ENCODE measurements at regions of chr19 and their contacts with region 1.

Region 1: DNA sequence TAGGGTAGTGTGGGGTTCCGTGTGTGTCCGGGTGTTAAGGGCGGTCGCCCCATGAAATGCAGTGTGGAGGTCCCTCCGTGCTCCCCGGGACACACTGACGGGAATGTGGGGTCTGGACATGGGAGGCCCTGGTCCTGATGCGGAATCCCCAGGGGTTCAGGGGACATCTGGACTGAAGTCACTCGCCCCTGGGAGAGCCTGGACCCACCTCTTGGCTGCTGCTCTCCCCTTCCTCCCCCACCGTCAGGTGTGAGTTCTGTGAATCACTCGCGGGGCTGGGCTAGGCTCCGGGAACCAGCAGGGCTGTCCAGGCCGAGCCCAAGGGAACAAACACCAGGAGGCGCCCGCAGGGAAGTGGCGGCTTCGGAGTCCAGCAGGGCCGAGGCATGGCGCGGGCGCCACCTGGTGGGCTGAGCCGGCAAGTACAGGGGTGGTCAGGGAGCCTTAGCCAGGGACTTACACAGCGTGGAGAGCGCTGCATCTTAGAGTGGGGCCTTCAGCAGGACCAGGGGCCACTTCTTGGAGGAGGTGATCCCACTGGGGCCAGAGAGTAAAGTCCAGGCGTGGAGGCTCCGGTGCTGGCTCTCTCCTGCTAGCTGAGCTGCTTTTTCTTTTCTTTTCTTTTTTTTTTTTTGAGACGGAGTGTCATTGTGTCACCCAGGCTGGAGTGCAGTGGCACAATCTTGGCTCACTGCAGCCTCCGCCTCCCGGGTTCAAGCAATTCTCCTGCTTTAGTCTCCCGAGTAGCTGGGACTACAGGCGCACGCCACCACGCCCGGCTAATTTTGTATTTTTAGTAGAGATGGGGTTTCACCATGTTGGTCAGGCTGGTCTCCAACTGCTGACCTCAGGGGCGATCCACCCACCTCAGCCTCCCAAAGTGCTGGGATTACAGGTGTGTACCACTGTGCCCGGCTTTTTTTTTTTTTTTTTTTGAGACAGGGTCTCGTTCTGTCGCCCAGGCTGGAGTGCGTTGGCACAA is 20.1 kb downstream of the WTIP start:
- DNase-seq: peak; percentile 28
- H3K4me3 ChIP-seq: no peak overlapping the region
- CTCF ChIP-seq: peak; percentile 100

Region 2: GRCh38 chr19:34381399-34382251 is 120.0 kb before region 1 on chr19:
- CTCF ChIA-PET with region 1: no interaction called
- POLR2A ChIA-PET with region 1: no interaction called
- DNase-seq: no peak
- H3K4me3 ChIP-seq: no peak overlapping the region
- CTCF ChIP-seq: no peak

Region 3: GRCh38 chr19:34484328-34484727 is 17.3 kb before region 1 on chr19:
- CTCF ChIA-PET with region 1: interaction called, 11 read pairs
- POLR2A ChIA-PET with region 1: no interaction called
- DNase-seq: no peak
- H3K4me3 ChIP-seq: no peak overlapping the region
- CTCF ChIP-seq: no peak

Region 4: GRCh38 chr19:34573226-34573864 is 71.7 kb after region 1 on chr19:
- CTCF ChIA-PET with region 1: no interaction called
- POLR2A ChIA-PET with region 1: no interaction called
- DNase-seq: no peak
- H3K4me3 ChIP-seq: no peak overlapping the region
- CTCF ChIP-seq: no peak